Activated CD4-positive, alpha-beta T cell treated with anti-CD3 and anti-CD28 coated beads, Interleukin-2, amount 10 ng/mL, durations not matched to agents 24 days and 14 days (primary cell): ENCODE measurements at regions of chr14 and their contacts with region 1.

Region 1: GRCh38 chr14:56422703-56423213 is 156.8 kb upstream of the TMEM260 start:
- DNase-seq: peak; percentile 67
- H3K4me3 Mint-ChIP-seq: no peak overlapping the region
- H3K27ac Mint-ChIP-seq: no peak overlapping the region
- H3K4me1 Mint-ChIP-seq: peaks cover 4% of the 10 kb centered on the region
- H3K27me3 Mint-ChIP-seq: peaks cover 6% of the 10 kb centered on the region

Region 2: GRCh38 chr14:55731881-55732498 is 690.8 kb before region 1 on chr14:
- intact Hi-C with region 1: loop called (anchors 5 kb)
- DNase-seq: peak; percentile 86
- H3K4me3 Mint-ChIP-seq: no peak overlapping the region
- H3K27ac Mint-ChIP-seq: no peak overlapping the region
- H3K4me1 Mint-ChIP-seq: peaks cover 15% of the 10 kb centered on the region
- H3K27me3 Mint-ChIP-seq: peaks cover 2% of the 10 kb centered on the region

Region 3: GRCh38 chr14:56181681-56182085 is 241.1 kb before region 1 on chr14:
- intact Hi-C with region 1: no loop called
- DNase-seq: no peak
- H3K4me3 Mint-ChIP-seq: no peak overlapping the region
- H3K27ac Mint-ChIP-seq: no peak overlapping the region
- H3K4me1 Mint-ChIP-seq: peaks cover 3% of the 10 kb centered on the region
- H3K27me3 Mint-ChIP-seq: no peaks in the 10 kb centered on the region

Region 4: GRCh38 chr14:56351861-56352260 is 70.9 kb before region 1 on chr14:
- intact Hi-C with region 1: no loop called
- DNase-seq: no peak
- H3K4me3 Mint-ChIP-seq: no peak overlapping the region
- H3K27ac Mint-ChIP-seq: no peak overlapping the region
- H3K4me1 Mint-ChIP-seq: no peaks in the 10 kb centered on the region
- H3K27me3 Mint-ChIP-seq: peaks cover 7% of the 10 kb centered on the region